ENCODE measurements at regions of chr2 and their contacts with region 1.

Region 1: GRCh38 chr2:15677141-15677843 is 85.6 kb downstream of the DDX1 start:
- DNase-seq: no peak
- ATAC-seq: no peak
- H3K4me3 ChIP-seq: no peak overlapping the region
- H3K27ac ChIP-seq: no peak overlapping the region
- H3K4me1 ChIP-seq: no peaks in the 10 kb centered on the region
- H3K27me3 ChIP-seq: peaks cover 0 to 6% of the 10 kb centered on the region in 2 experiments; a peak in 2 of 4 replicates
- CTCF ChIP-seq: no peak
- EP300 ChIP-seq: no peak
- POLR2A ChIP-seq: no peak
- RAD21 ChIP-seq: no peak

Region 2: GRCh38 chr2:15720561-15721307 is 43.4 kb after region 1 on chr2:
- CTCF ChIA-PET with region 1: no interaction called
- POLR2A ChIA-PET with region 1: no interaction called
- RAD21 ChIA-PET with region 1: no interaction called
- SMC1A ChIA-PET with region 1: no interaction called
- in situ Hi-C with region 1: no loop called
- intact Hi-C with region 1: loop called (anchors 1 kb)
- DNase-seq: no peak
- ATAC-seq: no peak
- H3K4me3 ChIP-seq: no peak overlapping the region
- H3K27ac ChIP-seq: no peak overlapping the region
- H3K4me1 ChIP-seq: no peaks in the 10 kb centered on the region
- H3K27me3 ChIP-seq: no peaks in the 10 kb centered on the region; a peak in 1 of 4 replicates
- CTCF ChIP-seq: no peak
- EP300 ChIP-seq: no peak
- POLR2A ChIP-seq: no peak
- RAD21 ChIP-seq: no peak